ENCODE measurements at regions of chr7 and their contacts with region 1.

Region 1: DNA sequence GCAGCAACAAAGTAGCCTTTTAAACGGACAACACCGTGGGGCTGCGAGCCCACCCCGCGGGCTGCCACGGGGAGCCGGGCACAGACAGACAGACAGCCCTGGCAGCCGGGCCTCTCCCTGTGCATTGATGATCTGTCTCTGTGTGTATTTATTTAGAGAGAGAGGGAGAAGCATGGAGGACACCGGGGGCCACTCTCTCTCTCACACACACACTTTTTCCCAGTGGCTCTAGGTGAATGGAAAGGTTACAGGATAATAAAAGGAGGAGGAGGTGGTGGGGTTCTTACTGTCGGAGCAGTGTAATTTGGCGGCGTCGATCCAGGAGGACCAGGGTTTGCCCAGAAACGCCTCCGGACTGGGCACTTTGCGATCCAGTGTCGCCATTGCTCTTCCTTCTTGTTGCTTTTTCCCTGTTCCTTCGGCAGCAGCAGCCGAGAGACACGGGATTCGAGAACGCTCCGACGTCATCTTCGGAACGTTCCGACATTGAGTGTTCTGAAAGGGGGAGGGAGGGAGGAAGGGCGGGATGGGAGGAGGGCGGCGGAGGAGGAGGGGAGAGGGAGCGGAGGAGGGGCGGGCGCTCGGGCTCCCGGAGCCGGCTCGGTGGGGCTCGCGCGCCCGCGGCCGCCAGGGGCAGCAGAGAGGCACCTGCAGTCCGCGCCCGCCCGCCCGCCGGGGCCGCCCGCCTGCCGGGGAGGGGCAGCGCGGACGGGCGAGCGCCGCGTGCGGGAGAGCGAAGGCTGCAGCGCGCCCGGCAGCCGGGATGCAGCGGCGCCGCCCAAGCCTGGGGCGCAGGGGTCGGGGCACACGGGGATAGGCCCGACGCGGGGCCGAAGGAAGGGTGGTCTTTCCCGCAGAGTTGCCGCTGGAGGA is at the start of gene ATXN7L1:
- DNase-seq: peak; percentile 98
- H3K4me3 ChIP-seq: peak within 1 kb of the TSS; percentile 60 to 85 (median 77)
- H3K27ac ChIP-seq: peak within 1 kb of the TSS; percentile 72
- H3K4me1 ChIP-seq: peaks cover 9% of the 10 kb centered on the region
- H3K27me3 ChIP-seq: no peaks in the 10 kb centered on the region
- CTCF ChIP-seq: peak; percentile 32 to 50
- POLR2A ChIP-seq: peak; percentile 86
- total RNA-seq, gene ATXN7L1: 14.9 and 15.6 TPM in 2 replicates

Region 2: DNA sequence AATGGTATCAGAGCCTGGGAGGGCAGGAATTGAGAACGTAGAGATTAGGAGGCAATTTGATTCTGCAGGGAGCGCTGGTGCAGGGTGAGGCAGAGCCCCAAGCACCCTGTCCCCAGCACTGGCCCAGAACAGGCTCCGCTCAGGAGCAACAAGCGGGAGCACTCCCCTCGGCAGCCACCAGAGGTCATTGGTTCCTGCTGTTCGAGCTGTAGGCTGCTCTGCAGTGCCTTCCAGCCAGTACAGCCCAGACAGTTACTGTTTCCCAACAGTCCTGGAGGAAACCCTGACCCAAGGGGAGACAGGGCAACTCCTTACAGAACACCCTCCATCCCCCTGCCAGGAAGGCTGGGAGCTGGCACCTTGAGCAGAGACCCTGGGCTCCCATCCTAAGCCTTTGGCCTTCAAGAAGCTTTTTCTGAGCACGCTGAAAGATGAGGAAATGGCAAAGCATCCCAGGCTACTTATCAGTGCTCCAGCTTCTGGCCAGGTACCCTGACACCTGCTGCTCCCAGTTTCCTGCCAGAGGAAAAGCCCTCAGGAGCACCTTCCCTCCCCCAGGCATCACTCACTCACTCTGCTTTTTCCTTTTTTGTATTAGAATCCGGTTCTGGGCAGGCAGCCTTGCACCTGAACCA is 223.9 kb before region 1 on chr7:
- CTCF ChIA-PET with region 1: no interaction called
- POLR2A ChIA-PET with region 1: no interaction called
- dilution Hi-C with region 1: no loop called
- intact Hi-C with region 1: loop called (anchors 10 kb)
- DNase-seq: peak; percentile 67
- H3K4me3 ChIP-seq: no peak overlapping the region
- H3K27ac ChIP-seq: no peak overlapping the region
- H3K4me1 ChIP-seq: no peaks in the 10 kb centered on the region
- H3K27me3 ChIP-seq: no peaks in the 10 kb centered on the region
- CTCF ChIP-seq: peak; percentile 74 to 91
- POLR2A ChIP-seq: no peak

Region 3: GRCh38 chr7:105759670-105760550 is 116.4 kb before region 1 on chr7:
- CTCF ChIA-PET with region 1: interaction called, 35 read pairs
- POLR2A ChIA-PET with region 1: no interaction called
- dilution Hi-C with region 1: no loop called
- intact Hi-C with region 1: loop called (anchors 1 kb)
- DNase-seq: peak; percentile 64
- H3K4me3 ChIP-seq: no peak overlapping the region
- H3K27ac ChIP-seq: no peak overlapping the region
- H3K4me1 ChIP-seq: no peaks in the 10 kb centered on the region
- H3K27me3 ChIP-seq: no peaks in the 10 kb centered on the region
- CTCF ChIP-seq: peak; percentile 33 to 43
- POLR2A ChIP-seq: no peak

Region 4: GRCh38 chr7:105769901-105770628 is 106.3 kb before region 1 on chr7:
- CTCF ChIA-PET with region 1: interaction called, 35 read pairs
- POLR2A ChIA-PET with region 1: no interaction called
- dilution Hi-C with region 1: no loop called
- intact Hi-C with region 1: no loop called
- DNase-seq: peak; percentile 16
- H3K4me3 ChIP-seq: no peak overlapping the region
- H3K27ac ChIP-seq: no peak overlapping the region
- H3K4me1 ChIP-seq: peaks cover 7% of the 10 kb centered on the region
- H3K27me3 ChIP-seq: no peaks in the 10 kb centered on the region
- CTCF ChIP-seq: no peak
- POLR2A ChIP-seq: no peak

Region 5: DNA sequence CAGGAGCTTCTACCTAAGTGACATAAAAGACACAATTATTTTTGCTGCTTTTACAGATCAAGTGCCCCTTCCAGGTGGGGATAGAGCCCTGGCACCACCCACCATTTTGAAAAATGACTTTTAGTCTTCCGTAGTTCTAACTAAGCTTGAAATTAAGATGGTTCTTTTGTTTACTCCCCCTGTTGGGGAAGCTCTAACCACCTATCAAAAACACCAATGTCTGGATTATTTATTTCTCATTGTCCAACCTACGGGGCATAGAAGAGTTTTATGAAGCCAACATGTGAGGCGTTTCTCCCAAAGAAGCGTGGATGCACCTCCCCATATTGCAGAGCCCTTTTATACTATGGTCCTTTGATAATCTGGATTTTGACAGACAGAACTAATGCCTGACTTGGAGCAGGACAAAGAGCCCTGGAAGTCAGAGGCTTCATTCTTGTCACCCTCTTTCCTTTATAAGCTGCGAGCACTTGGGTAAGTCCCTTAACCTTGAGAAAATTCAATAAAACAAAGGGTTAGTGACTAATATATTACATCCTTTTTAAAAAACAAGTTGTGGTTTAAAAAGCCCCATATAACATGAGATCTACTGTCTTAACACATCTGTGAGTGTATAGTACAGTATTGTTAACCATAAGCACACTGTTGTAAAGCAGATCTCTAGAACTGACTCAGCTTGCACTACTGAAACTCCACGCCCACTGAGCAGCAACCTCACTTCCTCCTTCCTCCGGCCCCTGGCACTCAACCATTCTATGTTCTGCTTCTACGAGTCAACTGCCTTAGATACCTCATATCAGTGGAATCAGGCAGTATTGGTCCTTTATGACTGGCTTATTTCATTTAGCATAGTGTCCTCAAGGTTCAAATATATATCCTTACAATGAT is 67.4 kb before region 1 on chr7:
- CTCF ChIA-PET with region 1: interaction called, 4 read pairs
- POLR2A ChIA-PET with region 1: no interaction called
- dilution Hi-C with region 1: no loop called
- intact Hi-C with region 1: loop called (anchors 1 kb)
- DNase-seq: peak; percentile 62
- H3K4me3 ChIP-seq: no peak overlapping the region
- H3K27ac ChIP-seq: no peak overlapping the region
- H3K4me1 ChIP-seq: peaks cover 26% of the 10 kb centered on the region
- H3K27me3 ChIP-seq: no peaks in the 10 kb centered on the region
- CTCF ChIP-seq: no peak
- POLR2A ChIP-seq: no peak

Region 6: GRCh38 chr7:105830391-105831301 is 45.7 kb before region 1 on chr7:
- CTCF ChIA-PET with region 1: interaction called, 3 read pairs
- POLR2A ChIA-PET with region 1: no interaction called
- dilution Hi-C with region 1: no loop called
- intact Hi-C with region 1: loop called (anchors 1 kb)
- DNase-seq: peak; percentile 88
- H3K4me3 ChIP-seq: no peak overlapping the region
- H3K27ac ChIP-seq: peak overlapping the region; percentile 88
- H3K4me1 ChIP-seq: peaks cover 30% of the 10 kb centered on the region
- H3K27me3 ChIP-seq: no peaks in the 10 kb centered on the region
- CTCF ChIP-seq: no peak
- POLR2A ChIP-seq: no peak

Region 7: GRCh38 chr7:106009403-106010226 is 133.3 kb after region 1 on chr7:
- CTCF ChIA-PET with region 1: interaction called, 4 read pairs
- POLR2A ChIA-PET with region 1: no interaction called
- dilution Hi-C with region 1: no loop called
- intact Hi-C with region 1: loop called (anchors 1 kb)
- DNase-seq: peak; percentile 84
- H3K4me3 ChIP-seq: no peak overlapping the region
- H3K27ac ChIP-seq: no peak overlapping the region
- H3K4me1 ChIP-seq: peaks cover 2% of the 10 kb centered on the region
- H3K27me3 ChIP-seq: peaks cover 15 to 25% of the 10 kb centered on the region in 2 experiments
- CTCF ChIP-seq: peak; percentile 99
- POLR2A ChIP-seq: no peak